Right ventricle myocardium inferior (tissue), 1 donor: ENCODE measurements at regions of chr5 and their contacts with region 1.

Region 1: DNA sequence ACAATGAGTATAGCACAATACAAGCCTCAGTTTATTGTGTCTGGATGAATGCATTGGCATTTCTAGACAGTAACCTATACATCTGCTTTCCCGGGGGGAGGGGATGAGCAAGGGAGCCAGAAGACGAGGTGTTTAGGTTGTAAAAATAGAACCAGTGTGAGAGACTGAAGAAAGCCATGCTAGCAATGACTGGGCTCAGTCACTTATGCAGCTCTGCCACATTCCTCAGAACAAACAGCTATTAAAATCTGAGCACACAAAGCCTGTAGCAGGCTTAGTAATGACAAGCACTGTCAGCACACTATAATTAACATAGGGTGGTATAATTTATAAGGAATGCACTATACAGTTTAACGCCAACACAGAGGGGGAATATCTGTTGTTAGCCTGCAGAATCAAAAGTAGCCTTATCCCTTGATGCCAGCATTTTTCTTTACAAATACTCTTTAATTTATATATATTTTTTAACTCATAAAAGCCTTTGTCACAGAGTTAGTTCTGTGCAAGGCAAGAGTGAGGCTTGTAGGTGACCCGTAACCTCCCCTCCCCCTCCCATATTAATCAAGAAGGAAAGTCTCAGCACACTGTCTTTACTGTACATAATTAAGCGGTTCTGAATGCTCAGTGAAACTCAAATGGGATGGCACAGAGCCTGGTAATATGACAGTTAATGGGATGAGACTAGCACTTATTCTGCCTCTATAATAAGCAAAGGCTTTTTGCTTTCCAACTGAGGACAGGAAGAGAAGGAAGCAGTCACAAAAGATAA is 295.4 kb downstream of the CSNK1G3 start:
- DNase-seq: no peak
- ATAC-seq: peak; percentile 74

Region 2: GRCh38 chr5:123673109-123673508 is 134.3 kb before region 1 on chr5:
- intact Hi-C with region 1: loop called (anchors 2 kb)
- DNase-seq: no peak
- ATAC-seq: peak; percentile 91